Thyroid gland (tissue), 4 donors: ENCODE measurements at regions of chr15 and their contacts with region 1.

Region 1: GRCh38 chr15:66946578-66947164 is 118.7 kb upstream of the SMAD3 start:
- DNase-seq: peak; percentile 62 to 74
- H3K4me3 ChIP-seq: no peak overlapping the region
- H3K27ac ChIP-seq: no peak overlapping the region
- H3K4me1 ChIP-seq: peaks cover 0 to 4% of the 10 kb centered on the region in 2 donors
- H3K27me3 ChIP-seq: no peaks in the 10 kb centered on the region
- CTCF ChIP-seq: peak; percentile 81 to 97 (median 90)
- POLR2A ChIP-seq: no peak

Region 2: DNA sequence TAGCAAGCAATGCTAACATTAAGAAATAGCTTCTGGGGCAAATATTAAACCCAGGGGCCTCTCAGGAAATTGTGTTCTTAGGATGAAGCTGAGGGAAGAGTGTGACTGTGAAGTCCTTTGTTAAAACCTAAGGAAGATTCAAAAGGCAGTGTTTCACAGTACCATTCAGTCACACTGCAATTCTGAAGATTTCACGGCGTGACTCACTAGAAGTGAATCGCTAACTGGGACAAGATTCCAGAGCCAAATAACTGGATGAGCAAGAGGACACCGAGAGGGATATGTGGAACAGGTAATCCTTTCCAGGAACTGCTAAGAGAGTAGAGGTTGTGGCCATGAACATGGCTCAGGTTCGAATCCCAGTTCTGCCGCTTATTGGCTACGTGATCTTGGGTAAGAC is 56.9 kb after region 1 on chr15:
- intact Hi-C with region 1: no loop called
- DNase-seq: no peak
- H3K4me3 ChIP-seq: no peak overlapping the region
- H3K27ac ChIP-seq: no peak overlapping the region
- H3K4me1 ChIP-seq: no peaks in the 10 kb centered on the region
- H3K27me3 ChIP-seq: no peaks in the 10 kb centered on the region
- CTCF ChIP-seq: no peak
- POLR2A ChIP-seq: no peak

Region 3: GRCh38 chr15:67307156-67307555 is 360.5 kb after region 1 on chr15:
- intact Hi-C with region 1: loop called (anchors 5 kb)
- DNase-seq: no peak
- H3K4me3 ChIP-seq: no peak overlapping the region
- H3K27ac ChIP-seq: no peak overlapping the region
- H3K4me1 ChIP-seq: no peaks in the 10 kb centered on the region
- H3K27me3 ChIP-seq: no peaks in the 10 kb centered on the region
- CTCF ChIP-seq: no peak
- POLR2A ChIP-seq: no peak

Region 4: GRCh38 chr15:67433495-67434099 is 486.9 kb after region 1 on chr15:
- intact Hi-C with region 1: loop called (anchors 10 kb)
- DNase-seq: peak; percentile 49 to 64
- H3K4me3 ChIP-seq: no peak overlapping the region
- H3K27ac ChIP-seq: no peak overlapping the region
- H3K4me1 ChIP-seq: no peaks in the 10 kb centered on the region
- H3K27me3 ChIP-seq: no peaks in the 10 kb centered on the region
- CTCF ChIP-seq: peak; percentile 51 to 82 (median 76)
- POLR2A ChIP-seq: no peak